ENCODE measurements at regions of chr5 and their contacts with region 1.

Region 1: DNA sequence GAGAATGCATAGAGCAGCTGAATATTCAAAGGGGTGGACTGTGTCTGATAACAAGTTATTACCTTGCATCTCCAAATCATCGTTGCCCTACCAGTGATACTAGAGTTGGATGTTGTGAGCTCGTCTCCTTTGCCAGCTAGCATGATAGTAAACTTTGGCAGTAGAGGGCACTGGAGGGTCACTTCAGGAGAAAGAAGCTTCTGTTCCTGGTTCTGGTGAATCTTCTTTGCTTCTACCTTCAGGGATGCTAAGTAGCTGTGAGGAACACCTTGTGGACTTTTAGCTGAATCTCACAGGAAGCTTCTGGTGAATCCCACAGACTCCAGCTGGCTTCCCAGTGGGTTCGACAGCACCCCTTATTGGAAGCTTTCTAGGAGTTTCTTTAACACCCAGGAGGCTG is 626.6 kb upstream of the SGCD start:
- DNase-seq: no peak
- ATAC-seq: peak; percentile 81
- H3K4me3 Mint-ChIP-seq: no peak overlapping the region
- H3K27ac Mint-ChIP-seq: no peak overlapping the region
- H3K4me1 Mint-ChIP-seq: no peaks in the 10 kb centered on the region
- H3K27me3 Mint-ChIP-seq: no peaks in the 10 kb centered on the region
- CTCF ChIP-seq: no peak

Region 2: DNA sequence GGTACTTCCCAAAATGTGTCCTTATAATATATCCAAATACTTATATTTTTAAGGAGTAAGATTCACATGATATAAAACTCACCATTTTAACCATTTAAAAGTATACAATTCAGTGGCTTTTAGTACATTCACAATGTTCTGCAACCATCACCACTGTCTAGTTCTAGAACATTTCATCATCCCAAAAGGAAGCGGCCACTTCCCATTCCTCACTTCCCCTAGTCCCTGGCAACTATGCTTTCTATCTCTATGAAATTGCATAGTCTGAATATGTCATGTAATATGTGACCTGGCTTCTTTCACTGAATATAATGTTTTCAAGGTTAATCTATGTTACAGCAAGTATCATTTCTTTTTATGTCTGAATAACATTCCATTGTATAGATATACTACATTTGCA is 11.5 kb after region 1 on chr5:
- CTCF ChIA-PET with region 1: no interaction called
- POLR2A ChIA-PET with region 1: no interaction called
- DNase-seq: no peak
- ATAC-seq: no peak
- H3K4me3 Mint-ChIP-seq: no peak overlapping the region
- H3K27ac Mint-ChIP-seq: no peak overlapping the region
- H3K4me1 Mint-ChIP-seq: no peaks in the 10 kb centered on the region
- H3K27me3 Mint-ChIP-seq: peaks cover under 1% of the 10 kb centered on the region; the same call in 1 of the 2 replicates
- CTCF ChIP-seq: no peak

Region 3: DNA sequence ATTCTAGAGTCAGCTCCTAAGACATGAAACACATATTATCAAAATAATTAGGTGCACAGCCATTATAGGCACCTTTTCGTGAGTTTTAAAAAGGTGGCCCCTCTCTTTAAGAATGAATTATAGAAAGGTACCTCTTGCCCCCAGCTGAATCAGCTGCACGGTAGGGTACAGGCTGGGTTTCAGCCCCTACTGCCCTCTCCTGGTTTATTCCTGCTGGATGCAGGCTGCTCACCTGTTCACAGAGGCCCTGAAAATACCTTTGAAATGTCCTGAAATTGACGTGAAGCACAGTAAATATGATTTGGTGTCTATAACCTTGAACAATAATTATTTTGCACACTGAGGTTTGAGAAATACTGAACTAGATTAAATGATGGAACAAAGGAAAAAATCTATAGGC is 121.8 kb after region 1 on chr5:
- CTCF ChIA-PET with region 1: interaction called, 19 read pairs
- POLR2A ChIA-PET with region 1: no interaction called
- DNase-seq: peak; percentile 20
- ATAC-seq: peak; percentile 93
- H3K4me3 Mint-ChIP-seq: no peak overlapping the region
- H3K27ac Mint-ChIP-seq: no peak overlapping the region
- H3K4me1 Mint-ChIP-seq: no peaks in the 10 kb centered on the region
- H3K27me3 Mint-ChIP-seq: no peaks in the 10 kb centered on the region
- CTCF ChIP-seq: no peak

Region 4: DNA sequence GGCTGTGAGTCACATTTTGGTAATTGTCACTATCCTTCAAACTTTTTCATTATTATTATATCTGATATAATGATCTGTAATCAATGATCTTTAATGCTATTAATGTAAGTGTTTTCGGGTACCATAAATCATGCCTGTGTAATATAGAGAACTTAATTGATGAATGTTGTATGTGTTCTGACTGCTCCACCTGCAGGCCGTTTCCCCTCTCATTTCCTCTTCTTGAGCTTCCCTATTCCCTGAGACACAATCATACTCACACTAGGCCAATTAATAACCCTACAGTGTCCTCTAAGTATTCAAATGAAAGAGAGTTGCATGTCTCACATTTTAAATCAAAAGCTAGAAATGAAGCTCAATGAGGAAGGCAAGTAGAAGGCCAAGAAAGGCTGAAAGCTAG is 205.7 kb after region 1 on chr5:
- CTCF ChIA-PET with region 1: interaction called, 17 read pairs
- POLR2A ChIA-PET with region 1: no interaction called
- DNase-seq: no peak
- ATAC-seq: no peak; the same call in 1 of the 2 replicates
- H3K4me3 Mint-ChIP-seq: no peak overlapping the region
- H3K27ac Mint-ChIP-seq: no peak overlapping the region
- H3K4me1 Mint-ChIP-seq: no peaks in the 10 kb centered on the region
- H3K27me3 Mint-ChIP-seq: no peaks in the 10 kb centered on the region
- CTCF ChIP-seq: no peak